ENCODE measurements at regions of chr3 and their contacts with region 1.

Region 1: DNA sequence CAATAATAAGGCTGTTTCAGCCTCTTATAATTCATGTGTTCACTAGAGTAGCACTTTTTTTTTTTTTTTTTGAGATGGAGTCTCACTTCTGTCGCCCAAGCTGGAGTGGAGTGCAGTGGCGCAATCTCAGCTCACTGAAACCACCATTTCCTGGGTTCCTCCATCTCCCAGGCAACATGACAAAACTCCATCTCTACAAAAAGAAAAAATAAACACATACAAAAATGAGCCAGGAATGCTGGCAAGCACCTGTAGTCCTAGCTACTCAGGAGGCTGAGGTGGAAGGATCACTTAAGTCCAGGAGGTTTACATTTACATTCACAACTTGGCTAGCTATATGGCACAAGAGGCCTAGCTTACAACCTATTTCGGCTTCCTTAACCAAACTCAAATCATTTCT is 6.8 kb downstream of the USP4 start:
- DNase-seq: no peak
- ATAC-seq: no peak
- H3K4me3 Mint-ChIP-seq: no peak overlapping the region
- H3K27ac Mint-ChIP-seq: peak overlapping the region; percentile 82
- H3K4me1 Mint-ChIP-seq: peaks cover 24% of the 10 kb centered on the region
- H3K27me3 Mint-ChIP-seq: no peaks in the 10 kb centered on the region
- CTCF ChIP-seq: no peak

Region 2: GRCh38 chr3:49148159-49148558 is 184.9 kb before region 1 on chr3:
- CTCF ChIA-PET with region 1: no interaction called
- POLR2A ChIA-PET with region 1: no interaction called
- intact Hi-C with region 1: no loop called
- DNase-seq: no peak
- ATAC-seq: no peak
- H3K4me3 Mint-ChIP-seq: no peak overlapping the region
- H3K27ac Mint-ChIP-seq: no peak overlapping the region
- H3K4me1 Mint-ChIP-seq: no peaks in the 10 kb centered on the region
- H3K27me3 Mint-ChIP-seq: no peaks in the 10 kb centered on the region
- CTCF ChIP-seq: no peak

Region 3: DNA sequence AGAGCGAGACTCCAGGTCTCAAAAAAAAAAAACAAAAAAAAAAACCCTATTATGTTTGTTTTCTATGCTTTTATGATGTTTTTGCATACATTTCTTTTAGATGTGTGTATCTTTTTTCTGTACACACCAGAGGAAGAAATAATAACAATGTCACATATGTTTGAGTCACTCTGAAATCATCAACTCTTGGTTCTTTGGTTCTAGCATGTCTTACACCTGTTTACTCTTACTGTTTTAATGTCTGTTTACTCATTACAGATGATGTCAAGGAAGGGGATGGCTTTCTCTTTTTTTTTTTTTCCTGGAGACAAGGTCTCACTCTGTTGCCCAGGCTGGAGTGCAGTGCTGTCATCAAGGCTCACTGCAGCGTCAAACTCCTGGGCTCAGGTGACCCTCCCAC is 54.6 kb after region 1 on chr3:
- CTCF ChIA-PET with region 1: no interaction called
- POLR2A ChIA-PET with region 1: no interaction called
- intact Hi-C with region 1: no loop called
- DNase-seq: no peak
- ATAC-seq: peak; percentile 17
- H3K4me3 Mint-ChIP-seq: no peak overlapping the region
- H3K27ac Mint-ChIP-seq: peak overlapping the region; percentile 62
- H3K4me1 Mint-ChIP-seq: peaks cover 51% of the 10 kb centered on the region
- H3K27me3 Mint-ChIP-seq: no peaks in the 10 kb centered on the region
- CTCF ChIP-seq: no peak

Region 4: GRCh38 chr3:49454458-49454857 is 121.4 kb after region 1 on chr3:
- CTCF ChIA-PET with region 1: interaction called, 19 read pairs
- POLR2A ChIA-PET with region 1: no interaction called
- intact Hi-C with region 1: no loop called
- DNase-seq: peak; percentile 36
- ATAC-seq: peak; percentile 67
- H3K4me3 Mint-ChIP-seq: no peak overlapping the region
- H3K27ac Mint-ChIP-seq: no peak overlapping the region
- H3K4me1 Mint-ChIP-seq: no peaks in the 10 kb centered on the region
- H3K27me3 Mint-ChIP-seq: no peaks in the 10 kb centered on the region
- CTCF ChIP-seq: peak; percentile 33